Activated T-helper 1 cell treated with anti-CD3 and anti-CD28 coated beads, Interleukin-12 subunit alpha, Interleukin-12 subunit beta, Interleukin-2, Interleukin-4 antibody, amounts not matched to agents 30 ng/mL and 10 ng/mL and 1 ng/mL, durations not matched to agents 14 hours and 24 hours and 36 hours (primary cell): ENCODE measurements at regions of chr15 and their contacts with region 1.

Region 1: DNA sequence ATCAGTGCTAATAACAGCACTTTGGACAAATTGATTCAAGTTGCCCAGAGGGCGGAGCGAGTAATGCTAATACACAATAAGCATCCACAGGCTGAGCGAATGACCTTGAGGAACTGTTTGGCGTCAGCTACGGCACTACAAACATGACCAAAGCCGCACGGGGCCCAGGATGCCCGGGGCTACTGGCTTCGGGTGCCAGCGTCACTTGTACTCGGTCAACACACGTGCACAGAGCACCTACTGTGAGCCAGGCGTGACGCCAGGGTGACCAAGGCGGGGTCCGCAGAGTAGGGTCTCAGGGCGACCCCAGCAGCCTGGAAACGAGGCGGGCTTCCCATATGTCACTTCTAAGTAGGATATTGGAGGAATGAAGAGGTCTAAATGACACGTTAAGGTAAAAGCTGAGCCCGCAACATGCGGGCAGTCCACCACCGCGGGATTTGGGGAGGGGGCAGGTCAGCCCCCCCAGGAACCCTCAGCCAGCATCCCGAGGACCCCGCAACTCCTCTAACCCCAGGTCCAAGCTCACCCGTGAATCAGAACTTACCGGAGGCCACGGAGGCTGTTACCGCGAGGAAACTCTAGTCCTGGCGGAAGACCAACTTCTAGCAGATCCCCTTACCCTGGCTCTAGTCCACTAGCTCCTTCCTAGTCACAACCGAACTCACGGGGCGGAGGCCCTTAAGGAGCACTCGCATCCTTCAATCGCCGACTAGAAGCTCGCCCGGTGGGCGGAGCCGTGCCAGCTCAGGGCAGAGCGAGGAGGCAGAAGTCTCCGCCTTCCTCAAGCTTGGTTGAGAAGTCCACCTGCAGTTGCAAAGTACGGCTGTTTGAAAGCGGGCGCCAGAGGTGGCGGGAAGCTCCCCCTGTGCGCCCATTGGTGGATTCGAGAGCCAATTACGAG is at the start of gene CEP152:
- DNase-seq: peak; percentile 98
- H3K4me3 Mint-ChIP-seq: peak within 1 kb of the TSS; percentile 97
- H3K27ac Mint-ChIP-seq: peak within 1 kb of the TSS; percentile 93
- H3K4me1 Mint-ChIP-seq: peaks cover 44% of the 10 kb centered on the region
- H3K27me3 Mint-ChIP-seq: peaks cover 15% of the 10 kb centered on the region
- total RNA-seq, gene CEP152: 27.3 and 28.0 TPM in 2 replicates

Region 2: DNA sequence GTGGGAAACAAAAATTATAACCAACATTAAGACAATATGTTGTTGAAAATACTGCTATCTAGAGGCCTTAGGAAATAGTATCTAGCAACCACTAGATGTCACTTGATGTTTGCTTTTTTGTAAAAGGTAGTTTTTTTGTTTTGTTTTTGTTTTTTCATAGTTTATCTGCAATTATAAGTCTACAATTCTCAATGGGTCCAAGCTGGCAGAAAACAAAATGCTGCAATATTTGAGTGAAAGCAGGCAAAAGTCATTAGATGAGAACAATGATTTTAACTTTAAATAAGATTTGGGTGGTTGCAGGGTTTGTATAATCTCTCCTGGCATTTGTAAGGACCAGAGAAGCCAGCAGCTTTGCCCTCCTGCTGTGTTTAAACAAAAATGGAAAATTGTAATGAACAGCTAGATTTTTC is 452.4 kb before region 1 on chr15:
- intact Hi-C with region 1: loop called (anchors 5 kb)
- DNase-seq: no peak
- H3K4me3 Mint-ChIP-seq: no peak overlapping the region
- H3K27ac Mint-ChIP-seq: no peak overlapping the region
- H3K4me1 Mint-ChIP-seq: peaks cover 16% of the 10 kb centered on the region
- H3K27me3 Mint-ChIP-seq: peaks cover 6% of the 10 kb centered on the region

Region 3: GRCh38 chr15:48963524-48964113 is 153.0 kb after region 1 on chr15 and contains the start of gene SHC4:
- intact Hi-C with region 1: loop called (anchors 2 kb)
- DNase-seq: no peak
- H3K4me3 Mint-ChIP-seq: peak within 1 kb of the TSS; percentile 84
- H3K27ac Mint-ChIP-seq: peak within 1 kb of the TSS; percentile 82
- H3K4me1 Mint-ChIP-seq: peaks cover 64% of the 10 kb centered on the region
- H3K27me3 Mint-ChIP-seq: peaks cover 11% of the 10 kb centered on the region
- total RNA-seq, gene SHC4: 25.7 and 26.4 TPM in 2 replicates

Region 4: GRCh38 chr15:49046220-49047102 is 235.8 kb after region 1 on chr15 and contains the start of gene SECISBP2L:
- intact Hi-C with region 1: loop called (anchors 1 kb)
- DNase-seq: peak; percentile 87
- H3K4me3 Mint-ChIP-seq: peak within 1 kb of the TSS; percentile 96
- H3K27ac Mint-ChIP-seq: peak within 1 kb of the TSS; percentile 91
- H3K4me1 Mint-ChIP-seq: peaks cover 35% of the 10 kb centered on the region
- H3K27me3 Mint-ChIP-seq: no peaks in the 10 kb centered on the region
- total RNA-seq, gene SECISBP2L: 38.0 and 44.8 TPM in 2 replicates

Region 5: DNA sequence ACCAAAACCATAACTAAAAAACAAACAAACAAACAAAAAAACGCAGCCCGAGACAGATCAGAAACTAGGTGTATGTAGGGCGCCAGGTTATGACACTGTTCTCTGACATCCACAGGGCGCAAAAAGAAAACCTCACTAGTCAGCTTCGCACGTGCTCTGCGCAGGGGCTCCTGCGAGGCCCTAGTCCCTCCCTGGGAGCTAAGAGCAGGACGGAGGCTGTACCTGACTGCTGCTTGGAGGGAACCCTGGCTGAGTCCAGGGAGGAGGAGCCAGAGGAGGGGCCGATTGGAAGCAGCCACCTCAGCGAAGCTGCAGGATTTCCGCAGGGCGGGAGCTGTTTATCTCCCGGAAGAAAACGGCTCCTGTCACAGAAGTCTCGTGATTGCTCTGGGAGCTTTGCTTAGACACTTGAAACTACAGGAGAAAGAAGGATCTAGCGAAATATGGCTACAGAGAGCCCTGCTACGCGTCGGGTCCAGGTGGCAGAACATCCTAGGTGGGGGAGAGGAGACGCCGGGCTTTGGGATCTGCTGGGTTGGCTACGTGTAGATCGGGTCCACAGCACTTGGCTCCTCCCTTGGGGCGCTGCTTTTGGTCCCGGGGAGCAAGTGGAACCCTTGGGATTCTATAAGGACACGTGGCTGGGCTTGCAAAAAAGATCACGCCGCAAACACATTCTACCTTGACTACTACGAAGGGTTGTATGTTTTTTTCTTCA is 359.4 kb after region 1 on chr15 and contains the start of gene GALK2:
- intact Hi-C with region 1: loop called (anchors 1 kb)
- DNase-seq: peak; percentile 82
- H3K4me3 Mint-ChIP-seq: peak within 1 kb of the TSS; percentile 97
- H3K27ac Mint-ChIP-seq: peak within 1 kb of the TSS; percentile 96
- H3K4me1 Mint-ChIP-seq: peaks cover 39% of the 10 kb centered on the region
- H3K27me3 Mint-ChIP-seq: no peaks in the 10 kb centered on the region
- total RNA-seq, gene GALK2: 22.3 and 23.5 TPM in 2 replicates